ENCODE measurements at regions of chr1 and their contacts with region 1.

Region 1: GRCh38 chr1:171984850-171985485 is 143.7 kb downstream of the DNM3 start:
- DNase-seq: no peak
- ATAC-seq: peak; percentile 70

Region 2: DNA sequence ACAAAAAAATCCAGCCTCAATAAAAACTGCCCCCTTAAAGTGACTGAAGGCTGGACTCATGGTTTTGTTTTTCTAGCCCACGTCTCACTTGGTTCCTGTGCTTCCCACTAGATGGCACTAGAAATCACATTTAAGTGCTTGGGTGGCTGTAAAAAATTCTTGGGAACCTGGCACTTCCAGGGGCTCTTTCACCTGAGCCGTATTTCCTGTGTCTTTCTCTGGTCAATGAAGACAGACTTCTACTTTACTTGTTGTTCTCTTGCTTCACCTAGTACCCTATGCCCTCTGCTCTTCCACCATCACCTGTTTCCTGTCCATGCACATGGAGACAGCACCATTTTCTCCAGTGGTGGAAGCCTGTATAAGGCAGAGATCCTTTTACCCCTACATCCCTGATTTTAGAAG is 183.5 kb before region 1 on chr1:
- intact Hi-C with region 1: loop called (anchors 5 kb)
- DNase-seq: no peak
- ATAC-seq: peak; percentile 31

Region 3: GRCh38 chr1:171948511-171948910 is 36.5 kb before region 1 on chr1:
- intact Hi-C with region 1: no loop called
- DNase-seq: no peak
- ATAC-seq: no peak

Region 4: DNA sequence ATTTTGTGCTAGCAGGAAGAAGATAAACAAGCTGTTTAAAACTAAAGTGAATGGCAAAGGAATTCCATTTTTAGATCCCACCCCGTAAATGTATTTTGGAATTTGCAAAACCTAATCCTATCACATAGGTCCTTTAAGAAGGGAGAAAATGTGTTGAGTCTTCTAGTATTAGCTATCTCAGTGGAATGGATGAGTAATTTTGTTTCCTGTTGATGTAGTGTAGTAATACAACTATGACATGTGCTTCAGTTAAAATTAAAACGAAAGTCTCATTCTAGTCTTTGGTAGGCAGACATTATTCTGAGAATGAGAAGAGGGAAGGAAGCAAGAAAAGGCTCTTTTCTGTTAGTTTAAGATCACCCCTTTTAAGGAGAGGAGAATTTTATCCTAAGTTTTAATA is 169.6 kb after region 1 on chr1:
- intact Hi-C with region 1: no loop called
- DNase-seq: no peak
- ATAC-seq: peak; percentile 61